Natural killer cell (primary cell): ENCODE measurements at regions of chr15 and their contacts with region 1.

Region 1: GRCh38 chr15:51737280-51738017 is at the start of gene LYSMD2:
- DNase-seq: peak; percentile 52 to 77
- ATAC-seq: peak; percentile 37 to 66 (median 65)
- H3K4me3 ChIP-seq: peak within 1 kb of the TSS; percentile 63
- H3K4me3 Mint-ChIP-seq: peak within 1 kb of the TSS; percentile 91
- H3K27ac ChIP-seq: peak within 1 kb of the TSS; percentile 81
- H3K27ac Mint-ChIP-seq: peak within 1 kb of the TSS; percentile 85 to 97
- H3K4me1 ChIP-seq: peaks cover 52% of the 10 kb centered on the region
- H3K4me1 Mint-ChIP-seq: peaks cover 46 to 48% of the 10 kb centered on the region in 2 donors
- H3K27me3 ChIP-seq: no peaks in the 10 kb centered on the region
- H3K27me3 Mint-ChIP-seq: peaks cover under 1 to 2% of the 10 kb centered on the region in 2 donors
- CTCF ChIP-seq: no peak
- total RNA-seq, gene LYSMD2: 8.1 to 13.6 (median 8.6) TPM

Region 2: DNA sequence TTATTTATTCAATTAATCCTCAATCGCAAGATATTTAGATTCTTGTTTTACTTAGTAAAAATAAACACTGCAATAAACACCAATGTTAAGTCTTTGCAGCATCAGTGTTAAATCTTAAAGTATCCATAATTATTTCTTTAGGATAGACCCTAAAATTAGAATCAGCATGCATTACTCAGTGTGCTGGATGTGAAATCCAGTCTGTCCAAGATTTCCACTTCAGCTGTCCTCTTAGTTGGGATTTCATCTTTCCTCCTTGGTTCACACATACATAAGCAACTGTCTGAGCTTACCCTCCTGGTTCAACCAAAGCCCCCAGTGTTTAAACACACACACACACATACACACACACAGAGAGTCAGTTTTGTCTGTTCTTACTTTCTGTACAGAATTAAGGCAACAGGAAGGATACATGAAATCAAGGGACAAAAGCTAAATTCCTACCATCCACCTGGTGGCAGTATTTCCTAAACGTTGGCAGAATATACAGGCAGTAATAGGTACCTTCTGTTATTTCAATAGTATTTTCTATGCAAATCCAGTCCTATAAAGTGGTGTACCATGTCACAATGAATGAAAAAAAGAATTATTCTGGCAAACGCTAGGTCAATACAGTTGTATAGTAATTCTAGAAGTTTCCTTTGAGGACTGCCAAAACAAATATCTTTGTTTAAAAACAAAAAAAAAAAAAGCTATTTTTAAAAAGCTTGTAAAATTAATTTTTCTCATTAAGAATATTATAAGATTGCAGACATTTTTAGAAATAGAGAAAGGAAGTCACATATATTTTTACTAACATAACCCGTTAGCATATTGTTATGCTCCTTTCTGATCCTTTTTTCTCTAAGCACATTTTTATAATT is 87.6 kb before region 1 on chr15:
- intact Hi-C with region 1: loop called (anchors 1 kb)
- DNase-seq: peak in 1 of 2 donors; percentile 87
- ATAC-seq: peak; percentile 72 to 86 (median 79)
- H3K4me3 ChIP-seq: no peak overlapping the region
- H3K4me3 Mint-ChIP-seq: no peak overlapping the region
- H3K27ac ChIP-seq: no peak overlapping the region
- H3K27ac Mint-ChIP-seq: no peak overlapping the region
- H3K4me1 ChIP-seq: no peaks in the 10 kb centered on the region
- H3K4me1 Mint-ChIP-seq: no peaks in the 10 kb centered on the region
- H3K27me3 ChIP-seq: no peaks in the 10 kb centered on the region
- H3K27me3 Mint-ChIP-seq: peaks cover 7 to 11% of the 10 kb centered on the region in 2 donors
- CTCF ChIP-seq: peak; percentile 94

Region 3: GRCh38 chr15:51688863-51689262 is 48.6 kb before region 1 on chr15:
- intact Hi-C with region 1: loop called (anchors 1 kb)
- DNase-seq: peak in 1 of 2 donors; percentile 41
- ATAC-seq: no peak
- H3K4me3 ChIP-seq: no peak overlapping the region
- H3K4me3 Mint-ChIP-seq: no peak overlapping the region
- H3K27ac ChIP-seq: no peak overlapping the region
- H3K27ac Mint-ChIP-seq: no peak overlapping the region
- H3K4me1 ChIP-seq: no peaks in the 10 kb centered on the region
- H3K4me1 Mint-ChIP-seq: no peaks in the 10 kb centered on the region
- H3K27me3 ChIP-seq: peaks cover 10% of the 10 kb centered on the region
- H3K27me3 Mint-ChIP-seq: peaks cover 35 to 57% of the 10 kb centered on the region in 2 donors
- CTCF ChIP-seq: no peak

Region 4: GRCh38 chr15:51776952-51777574 is 39.6 kb after region 1 on chr15:
- intact Hi-C with region 1: loop called (anchors 2 kb)
- DNase-seq: peak; percentile 26 to 86
- ATAC-seq: peak; percentile 72 to 81 (median 78)
- H3K4me3 ChIP-seq: no peak overlapping the region
- H3K4me3 Mint-ChIP-seq: no peak overlapping the region
- H3K27ac ChIP-seq: no peak overlapping the region
- H3K27ac Mint-ChIP-seq: no peak overlapping the region
- H3K4me1 ChIP-seq: no peaks in the 10 kb centered on the region
- H3K4me1 Mint-ChIP-seq: no peaks in the 10 kb centered on the region
- H3K27me3 ChIP-seq: no peaks in the 10 kb centered on the region
- H3K27me3 Mint-ChIP-seq: peaks cover 0 to under 1% of the 10 kb centered on the region in 2 donors
- CTCF ChIP-seq: peak; percentile 69

Region 5: GRCh38 chr15:51829360-51830275 is 92.2 kb after region 1 on chr15 and contains the start of gene TMOD3:
- intact Hi-C with region 1: loop called (anchors 10 kb)
- DNase-seq: peak; percentile 87 to 93
- ATAC-seq: peak; percentile 83 to 91 (median 90)
- H3K4me3 ChIP-seq: peak within 1 kb of the TSS; percentile 87
- H3K4me3 Mint-ChIP-seq: peak within 1 kb of the TSS; percentile 97
- H3K27ac ChIP-seq: peak within 1 kb of the TSS; percentile 83
- H3K27ac Mint-ChIP-seq: peak within 1 kb of the TSS; percentile 88 to 97
- H3K4me1 ChIP-seq: peaks cover 9% of the 10 kb centered on the region
- H3K4me1 Mint-ChIP-seq: peaks cover 47 to 50% of the 10 kb centered on the region in 2 donors
- H3K27me3 ChIP-seq: no peaks in the 10 kb centered on the region
- H3K27me3 Mint-ChIP-seq: peaks cover 8 to 12% of the 10 kb centered on the region in 2 donors
- CTCF ChIP-seq: no peak
- total RNA-seq, gene TMOD3: 56.5 to 72.3 (median 69.4) TPM

Region 6: GRCh38 chr15:51971375-51972133 is 234.1 kb after region 1 on chr15 and contains the start of gene LEO1:
- intact Hi-C with region 1: loop called (anchors 5 kb)
- DNase-seq: peak; percentile 80 to 97
- ATAC-seq: peak; percentile 91 to 98 (median 93)
- H3K4me3 ChIP-seq: peak within 1 kb of the TSS; percentile 77
- H3K4me3 Mint-ChIP-seq: peak within 1 kb of the TSS; percentile 99
- H3K27ac ChIP-seq: peak within 1 kb of the TSS; percentile 77
- H3K27ac Mint-ChIP-seq: peak within 1 kb of the TSS; percentile 96 to 99
- H3K4me1 ChIP-seq: peaks cover 19% of the 10 kb centered on the region
- H3K4me1 Mint-ChIP-seq: peaks cover 25 to 28% of the 10 kb centered on the region in 2 donors
- H3K27me3 ChIP-seq: no peaks in the 10 kb centered on the region
- H3K27me3 Mint-ChIP-seq: no peaks in the 10 kb centered on the region
- CTCF ChIP-seq: no peak
- total RNA-seq, gene LEO1: 13.2 to 19.5 (median 16.0) TPM